Gastrocnemius medialis (tissue), 4 donors: ENCODE measurements at regions of chr5 and their contacts with region 1.

Region 1: DNA sequence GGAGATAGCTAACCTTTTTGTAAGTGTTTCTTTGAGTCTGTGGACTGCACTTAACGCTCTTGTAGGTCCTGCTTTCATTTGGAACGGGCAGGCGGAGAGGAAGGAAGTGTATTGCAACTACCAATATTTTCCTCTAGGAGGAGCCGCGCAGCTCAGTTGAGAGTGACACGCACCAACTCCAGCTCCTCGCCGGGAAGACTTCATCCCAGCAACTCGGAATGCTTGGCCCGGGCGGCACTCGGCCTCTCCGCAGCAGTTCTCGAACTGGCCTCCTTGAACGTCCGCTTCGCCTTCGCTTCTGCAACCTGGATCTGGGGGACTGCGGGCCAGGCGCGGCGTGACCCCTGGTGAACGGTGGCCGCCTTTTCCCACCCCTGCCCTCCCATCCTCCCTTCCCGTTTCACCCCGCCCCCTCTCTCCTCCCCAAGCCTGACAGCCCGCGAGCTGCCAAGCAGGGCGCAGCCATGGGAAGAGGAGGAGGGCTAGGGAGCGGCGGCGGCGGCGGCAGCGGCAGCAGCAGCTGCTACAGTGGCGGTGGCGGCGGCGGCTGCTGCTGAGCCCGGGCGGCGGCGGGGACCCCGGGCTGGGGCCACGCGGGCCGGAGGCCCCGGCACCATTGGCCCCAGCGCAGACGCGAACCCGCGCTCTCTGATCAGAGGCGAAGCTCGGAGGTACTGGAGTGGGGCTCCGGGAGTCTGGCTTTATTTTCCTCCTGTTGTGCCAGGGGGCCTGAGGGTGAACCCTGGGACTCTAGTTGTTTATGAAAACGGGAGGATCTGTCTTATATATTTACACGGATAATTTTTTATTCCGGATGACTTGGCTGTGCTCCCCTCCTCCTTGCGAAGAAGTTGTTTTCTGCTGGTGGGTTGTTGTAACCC is at the start of gene GHR:
- DNase-seq: peak; percentile 86 to 87
- ATAC-seq: peak; percentile 86 to 91
- H3K4me3 ChIP-seq: peak within 1 kb of the TSS; percentile 62 to 90 (median 80)
- H3K27ac ChIP-seq: peak within 1 kb of the TSS; percentile 71 to 90 (median 85)
- H3K4me1 ChIP-seq: peaks cover 28 to 30% of the 10 kb centered on the region in 2 donors
- H3K27me3 ChIP-seq: no peaks in the 10 kb centered on the region
- CTCF ChIP-seq: peak; percentile 72 to 89 (median 84)
- POLR2A ChIP-seq: peak in 1 of 2 donors; percentile 31
- total RNA-seq, gene GHR: 38.9 to 105 (median 74.8) TPM

Region 2: GRCh38 chr5:42495914-42496313 is 72.4 kb after region 1 on chr5:
- in situ Hi-C with region 1: no loop called
- intact Hi-C with region 1: loop called (anchors 5 kb)
- DNase-seq: peak; percentile 48 to 59
- ATAC-seq: peak; percentile 61 to 72
- H3K4me3 ChIP-seq: no peak overlapping the region
- H3K27ac ChIP-seq: peak overlapping the region; percentile 69 to 91 (median 78)
- H3K4me1 ChIP-seq: peaks cover 94 to 99% of the 10 kb centered on the region in 2 donors
- H3K27me3 ChIP-seq: no peaks in the 10 kb centered on the region
- CTCF ChIP-seq: no peak
- POLR2A ChIP-seq: no peak

Region 3: GRCh38 chr5:42583322-42583721 is 159.8 kb after region 1 on chr5:
- in situ Hi-C with region 1: loop called in 1 of 4 experiments (anchors 10 kb)
- intact Hi-C with region 1: loop called (anchors 2 kb)
- DNase-seq: peak; percentile 53 to 70
- ATAC-seq: peak; percentile 23 to 45
- H3K4me3 ChIP-seq: no peak overlapping the region
- H3K27ac ChIP-seq: peak overlapping the region; percentile 78 to 84 (median 80)
- H3K4me1 ChIP-seq: peaks cover 61 to 63% of the 10 kb centered on the region in 2 donors
- H3K27me3 ChIP-seq: no peaks in the 10 kb centered on the region
- CTCF ChIP-seq: peak; percentile 79 to 87 (median 83)
- POLR2A ChIP-seq: no peak

Region 4: DNA sequence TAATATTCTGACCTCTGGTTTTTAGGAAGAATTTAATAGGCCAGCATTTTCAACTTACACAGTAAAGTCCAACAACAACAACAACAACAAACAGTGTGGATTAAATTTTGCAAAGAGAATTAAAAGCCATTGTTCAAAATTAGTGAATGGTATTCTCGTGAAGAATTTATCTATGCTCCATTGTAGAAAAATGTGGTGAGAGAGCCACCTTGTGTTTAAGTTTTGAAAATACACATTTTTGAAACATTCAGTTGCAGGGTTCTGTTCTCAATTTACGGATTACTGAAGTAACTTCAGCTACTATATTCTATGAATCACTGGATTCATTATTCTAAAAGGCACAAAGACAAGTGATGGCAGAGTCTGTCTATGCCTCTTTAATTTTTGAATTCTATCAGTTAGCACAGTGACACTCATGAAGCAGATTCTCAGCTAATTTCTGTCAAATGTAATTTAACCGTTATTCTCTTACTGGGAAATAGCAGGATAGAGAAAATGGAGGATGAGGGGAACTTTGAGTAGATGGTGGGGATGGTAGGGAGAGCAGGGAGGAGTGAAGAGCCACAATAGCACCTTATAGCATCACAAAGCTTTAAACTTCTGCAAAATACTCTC is 344.1 kb after region 1 on chr5:
- in situ Hi-C with region 1: loop called in 2 of 4 experiments (anchors 10 to 25 kb)
- intact Hi-C with region 1: loop called (anchors 1 kb)
- DNase-seq: no peak
- ATAC-seq: no peak
- H3K4me3 ChIP-seq: no peak overlapping the region
- H3K27ac ChIP-seq: no peak overlapping the region
- H3K4me1 ChIP-seq: peaks cover 6% of the 10 kb centered on the region in 2 donors
- H3K27me3 ChIP-seq: no peaks in the 10 kb centered on the region
- CTCF ChIP-seq: peak; percentile 52 to 60 (median 58)
- POLR2A ChIP-seq: no peak

Region 5: GRCh38 chr5:42889311-42889933 is 465.9 kb after region 1 on chr5:
- in situ Hi-C with region 1: loop called in 2 of 4 experiments (anchors 25 kb)
- intact Hi-C with region 1: loop called (anchors 10 kb)
- DNase-seq: peak; percentile 57 to 69
- ATAC-seq: peak; percentile 95 to 98
- H3K4me3 ChIP-seq: no peak overlapping the region
- H3K27ac ChIP-seq: no peak overlapping the region
- H3K4me1 ChIP-seq: no peaks in the 10 kb centered on the region
- H3K27me3 ChIP-seq: no peaks in the 10 kb centered on the region
- CTCF ChIP-seq: peak; percentile 70 to 96 (median 84)
- POLR2A ChIP-seq: no peak